ENCODE measurements at regions of chr19 and their contacts with region 1.

Region 1: DNA sequence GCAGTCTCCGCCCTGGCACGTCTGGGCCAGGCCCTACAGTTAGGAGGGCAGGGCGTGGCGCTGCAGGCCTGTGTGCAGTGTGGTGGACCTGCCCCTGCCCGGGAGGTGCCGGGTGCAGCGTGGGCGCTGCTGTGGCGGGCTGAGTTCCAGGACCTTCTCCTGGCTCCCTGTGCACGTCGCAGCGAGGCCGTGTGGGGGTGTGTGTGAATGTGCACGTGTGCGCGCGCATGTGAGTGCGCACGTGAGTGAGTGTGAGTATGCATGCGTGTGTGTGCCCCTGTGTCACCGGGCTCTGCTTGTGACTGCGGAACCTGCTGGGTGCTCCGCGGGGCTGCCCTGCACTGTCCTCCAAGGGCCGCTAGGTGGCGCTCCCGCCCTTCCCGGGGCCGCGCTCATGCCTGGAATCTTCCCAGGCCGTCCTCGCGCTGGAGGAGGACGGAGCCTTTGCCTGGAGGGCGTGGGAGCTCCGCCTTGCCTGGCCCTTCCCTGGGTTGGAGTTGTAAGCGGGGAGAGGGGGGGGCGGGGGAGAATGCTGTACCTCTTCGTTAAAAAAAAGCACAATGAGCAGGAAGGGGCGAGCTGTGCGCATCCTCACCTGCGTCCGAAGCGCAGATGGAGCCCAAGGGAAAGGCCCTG is 79.3 kb downstream of the KDM4B start:
- DNase-seq: peak; percentile 85 to 94 (median 90)
- H3K4me3 ChIP-seq: no peak overlapping the region
- H3K27ac ChIP-seq: no peak overlapping the region
- H3K4me1 ChIP-seq: peaks cover 0 to 18% (median 0%) of the 10 kb centered on the region in 3 donors
- H3K27me3 ChIP-seq: no peaks in the 10 kb centered on the region
- CTCF ChIP-seq: peak; percentile 97

Region 2: DNA sequence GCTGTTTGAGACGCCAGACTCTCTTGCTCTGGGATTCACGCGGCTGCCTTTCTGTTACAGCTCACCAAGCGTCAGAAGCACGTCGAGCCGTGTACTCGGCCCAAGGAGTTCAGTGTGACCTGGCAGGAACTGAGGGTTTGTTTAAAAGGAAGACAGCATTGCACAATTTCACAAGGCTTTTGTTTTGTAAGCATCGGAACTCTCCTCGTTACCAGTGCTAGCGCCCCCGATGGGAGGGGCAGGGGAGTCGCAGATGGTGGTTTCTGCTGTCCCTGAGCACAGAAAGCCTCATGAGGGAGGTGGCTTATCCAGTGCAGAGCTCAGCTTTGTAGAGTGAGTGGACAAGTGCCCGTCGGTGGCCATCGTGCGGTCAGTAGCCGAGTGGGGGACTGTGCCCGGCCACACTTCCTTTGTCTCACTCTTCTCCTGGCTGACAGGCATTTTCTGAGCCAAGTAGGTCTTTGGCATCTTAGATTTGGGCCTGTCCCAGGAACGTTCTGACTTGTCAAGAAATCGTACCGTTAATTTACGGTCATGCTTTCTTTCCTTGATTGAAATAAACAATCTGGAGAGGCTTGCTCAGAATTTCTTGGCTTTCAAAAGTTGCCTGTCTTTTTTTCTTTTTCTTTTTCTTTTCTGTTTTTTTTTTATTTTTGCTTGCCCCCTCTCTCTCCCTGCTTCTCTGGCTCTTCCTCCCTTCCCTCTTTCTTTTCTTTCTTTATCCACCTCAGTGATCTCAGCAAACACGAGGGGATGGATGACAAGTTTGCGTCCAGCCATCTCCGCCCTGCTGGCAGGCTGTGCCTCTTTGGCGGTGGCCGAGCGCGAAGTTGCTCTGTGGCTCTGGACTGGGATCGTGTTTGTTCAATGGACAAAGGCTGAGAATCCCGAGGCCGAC is 71.6 kb before region 1 on chr19:
- intact Hi-C with region 1: no loop called
- DNase-seq: peak in 3 of 5 donors; percentile 45 to 92 (median 70)
- H3K4me3 ChIP-seq: peak overlapping the region in 1 of 3 donors; percentile 3
- H3K27ac ChIP-seq: peak overlapping the region; percentile 65 to 66
- H3K4me1 ChIP-seq: peaks cover 0 to 30% (median 22%) of the 10 kb centered on the region in 3 donors
- H3K27me3 ChIP-seq: no peaks in the 10 kb centered on the region
- CTCF ChIP-seq: peak; percentile 21

Region 3: DNA sequence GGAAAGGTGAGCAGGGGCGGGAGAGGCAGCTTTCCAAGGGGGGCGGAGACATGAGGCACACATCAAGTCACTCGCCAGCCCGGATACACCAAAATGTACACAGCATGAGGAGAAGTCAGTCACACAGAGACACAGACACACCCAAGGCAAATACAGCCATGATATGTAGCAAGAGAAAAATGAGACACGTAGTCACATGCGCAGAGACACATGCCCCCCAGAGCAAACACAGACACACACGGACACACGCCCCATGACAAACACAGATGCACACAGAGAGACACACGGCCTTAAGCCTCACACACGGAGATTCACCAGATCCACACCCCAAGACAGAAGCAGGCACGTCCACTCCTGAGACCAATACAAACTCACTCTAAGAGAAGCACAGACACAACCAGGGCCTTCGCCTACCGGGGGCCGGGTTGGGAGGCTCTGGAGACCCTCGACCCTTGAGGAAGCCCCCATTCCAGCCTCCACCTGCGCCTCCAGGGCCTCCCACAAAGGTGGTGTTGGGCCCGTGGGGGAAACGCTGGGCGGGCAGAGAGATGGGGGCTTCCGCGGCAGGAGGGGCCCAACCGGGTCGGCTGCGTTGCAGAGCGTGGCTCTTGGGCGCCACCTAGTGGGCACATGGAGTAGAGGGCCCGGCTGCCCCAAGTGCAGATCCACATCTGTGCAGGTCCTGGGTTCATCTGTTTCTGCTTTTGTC is 529.7 kb after region 1 on chr19:
- intact Hi-C with region 1: loop called (anchors 5 kb)
- DNase-seq: peak; percentile 66 to 85 (median 73)
- H3K4me3 ChIP-seq: no peak overlapping the region
- H3K27ac ChIP-seq: no peak overlapping the region
- H3K4me1 ChIP-seq: no peaks in the 10 kb centered on the region
- H3K27me3 ChIP-seq: no peaks in the 10 kb centered on the region
- CTCF ChIP-seq: peak; percentile 93

Measured in kidney (tissue), 22 donors.